CD4-positive, alpha-beta memory T cell (primary cell): ENCODE measurements at regions of chr7 and their contacts with region 1.

Region 1: DNA sequence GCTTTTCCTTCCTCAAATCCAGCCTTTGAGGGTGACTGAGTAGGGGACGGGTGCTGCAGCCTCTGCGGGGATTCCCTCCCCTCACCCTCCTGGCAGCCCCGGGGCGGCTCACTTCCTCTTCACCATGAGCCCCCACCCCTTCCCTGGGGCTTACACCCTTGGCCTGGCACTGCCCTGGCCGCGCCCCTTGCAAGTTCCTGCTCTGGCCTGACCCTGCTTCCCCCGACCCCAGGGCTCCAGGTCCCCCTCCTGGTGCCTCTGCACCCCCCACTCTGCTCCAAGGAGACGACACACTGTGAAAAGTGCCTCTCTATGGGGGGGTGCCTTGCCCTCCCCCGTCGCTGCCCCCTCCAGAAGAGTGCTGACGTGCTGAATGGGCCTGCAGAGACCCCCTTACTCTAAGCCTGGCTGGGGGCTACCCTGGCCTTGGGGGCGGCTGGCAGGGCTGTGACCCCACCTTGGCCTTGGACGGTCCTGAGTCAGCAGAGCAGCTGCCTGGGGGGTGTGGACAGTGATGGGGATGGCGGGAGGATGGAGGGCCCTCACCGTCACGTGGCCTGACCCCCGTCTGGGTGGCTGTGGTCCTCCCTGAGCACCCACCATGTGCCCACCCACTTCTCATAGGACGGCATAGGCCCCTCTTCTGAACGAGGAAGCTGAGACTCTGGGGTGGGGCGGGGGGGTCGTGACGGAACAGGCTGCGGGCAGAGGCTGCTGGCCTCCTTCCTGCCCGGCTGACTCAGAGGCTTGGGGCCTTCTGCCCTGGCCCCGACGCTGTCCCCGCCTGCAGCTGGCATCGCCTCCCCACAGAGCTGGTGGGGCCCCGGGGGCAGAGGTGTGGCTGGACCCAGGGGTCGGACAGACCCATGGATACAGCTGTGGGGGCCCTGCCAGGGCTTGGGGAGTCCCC is 9.8 kb downstream of the LFNG start:
- DNase-seq: peak; percentile 41 to 84 (median 54)
- H3K4me3 ChIP-seq: peak overlapping the region in 1 of 2 donors; percentile 50
- H3K4me3 Mint-ChIP-seq: peak overlapping the region; percentile 71 to 91 (median 80)
- H3K27ac ChIP-seq: peak overlapping the region; percentile 83
- H3K27ac Mint-ChIP-seq: peak overlapping the region; percentile 84 to 99 (median 93)
- H3K4me1 ChIP-seq: peaks cover 69% of the 10 kb centered on the region
- H3K4me1 Mint-ChIP-seq: peaks cover 19 to 65% (median 48%) of the 10 kb centered on the region in 4 donors
- H3K27me3 ChIP-seq: no peaks in the 10 kb centered on the region
- H3K27me3 Mint-ChIP-seq: no peaks in the 10 kb centered on the region

Region 2: GRCh38 chr7:1787241-1787640 is 742.2 kb before region 1 on chr7:
- CTCF ChIA-PET with region 1: no interaction called
- POLR2A ChIA-PET with region 1: no interaction called
- intact Hi-C with region 1: no loop called
- DNase-seq: no peak
- H3K4me3 ChIP-seq: no peak overlapping the region
- H3K4me3 Mint-ChIP-seq: no peak overlapping the region
- H3K27ac ChIP-seq: no peak overlapping the region
- H3K27ac Mint-ChIP-seq: no peak overlapping the region
- H3K4me1 ChIP-seq: no peaks in the 10 kb centered on the region
- H3K4me1 Mint-ChIP-seq: peaks cover 0 to 4% (median 0%) of the 10 kb centered on the region in 4 donors
- H3K27me3 ChIP-seq: no peaks in the 10 kb centered on the region
- H3K27me3 Mint-ChIP-seq: peaks cover 10 to 11% of the 10 kb centered on the region in 2 donors

Region 3: DNA sequence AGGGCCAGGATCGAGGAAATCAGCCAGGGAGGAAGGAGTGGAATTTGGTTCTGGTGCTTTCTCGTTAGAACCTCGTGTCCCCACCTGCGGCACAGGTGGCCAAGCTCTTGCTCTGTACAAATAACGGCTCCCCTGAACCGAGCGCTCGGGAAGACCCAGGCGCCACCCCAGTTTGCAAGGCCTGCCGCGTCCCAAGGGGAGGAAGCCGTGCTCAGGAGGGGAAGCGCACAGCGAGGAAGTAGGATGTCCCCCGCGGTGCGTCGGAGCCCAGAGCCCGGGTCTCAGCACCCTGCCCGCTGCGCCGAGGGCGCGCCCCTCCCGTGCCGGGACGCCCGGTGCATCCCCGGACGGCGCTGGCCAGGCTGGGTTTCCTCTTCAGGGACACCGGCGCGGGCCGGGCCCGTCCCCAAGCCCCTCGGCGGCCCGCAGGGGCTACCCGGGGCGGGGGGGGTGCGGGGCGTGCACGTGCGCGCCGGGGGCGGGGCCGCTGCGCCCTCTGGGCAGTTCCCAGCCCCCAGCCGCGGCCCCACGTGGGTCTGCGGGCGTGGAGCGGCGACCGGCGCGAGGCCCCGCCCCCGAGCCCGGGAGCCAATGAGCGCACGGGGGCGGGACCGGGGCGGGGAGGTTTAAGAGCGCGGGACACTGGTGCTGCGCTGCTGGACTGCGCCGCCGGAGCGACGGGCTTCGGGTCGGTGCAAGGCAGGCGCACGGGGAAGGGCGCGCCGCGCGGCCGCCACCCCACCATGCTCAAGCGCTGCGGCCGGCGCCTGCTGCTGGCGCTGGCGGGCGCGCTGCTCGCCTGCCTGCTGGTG is 10.1 kb before region 1 on chr7 and contains the start of gene LFNG:
- CTCF ChIA-PET with region 1: interaction called, 3 read pairs
- POLR2A ChIA-PET with region 1: interaction called, 96 read pairs
- intact Hi-C with region 1: loop called (anchors 1 kb)
- DNase-seq: peak; percentile 77 to 86 (median 81)
- H3K4me3 ChIP-seq: peak within 1 kb of the TSS; percentile 93 to 98
- H3K4me3 Mint-ChIP-seq: peak within 1 kb of the TSS; percentile 97 to 99 (median 98)
- H3K27ac ChIP-seq: peak within 1 kb of the TSS; percentile 80
- H3K27ac Mint-ChIP-seq: peak within 1 kb of the TSS; percentile 89 to 99 (median 92)
- H3K4me1 ChIP-seq: peaks cover 37% of the 10 kb centered on the region
- H3K4me1 Mint-ChIP-seq: peaks cover 14 to 45% (median 25%) of the 10 kb centered on the region in 4 donors
- H3K27me3 ChIP-seq: no peaks in the 10 kb centered on the region
- H3K27me3 Mint-ChIP-seq: no peaks in the 10 kb centered on the region
- total RNA-seq, gene LFNG: 125 to 127 TPM

Region 4: GRCh38 chr7:2540641-2541051 is 11.2 kb after region 1 on chr7:
- CTCF ChIA-PET with region 1: no interaction called
- POLR2A ChIA-PET with region 1: interaction called, 16 read pairs
- intact Hi-C with region 1: loop called (anchors 1 kb)
- DNase-seq: no peak
- H3K4me3 ChIP-seq: no peak overlapping the region
- H3K4me3 Mint-ChIP-seq: no peak overlapping the region
- H3K27ac ChIP-seq: no peak overlapping the region
- H3K27ac Mint-ChIP-seq: peak overlapping the region in 1 of 7 donors; percentile 65
- H3K4me1 ChIP-seq: no peaks in the 10 kb centered on the region
- H3K4me1 Mint-ChIP-seq: no peaks in the 10 kb centered on the region
- H3K27me3 ChIP-seq: no peaks in the 10 kb centered on the region
- H3K27me3 Mint-ChIP-seq: no peaks in the 10 kb centered on the region